ENCODE measurements at regions of chr2 and their contacts with region 1.

Region 1: DNA sequence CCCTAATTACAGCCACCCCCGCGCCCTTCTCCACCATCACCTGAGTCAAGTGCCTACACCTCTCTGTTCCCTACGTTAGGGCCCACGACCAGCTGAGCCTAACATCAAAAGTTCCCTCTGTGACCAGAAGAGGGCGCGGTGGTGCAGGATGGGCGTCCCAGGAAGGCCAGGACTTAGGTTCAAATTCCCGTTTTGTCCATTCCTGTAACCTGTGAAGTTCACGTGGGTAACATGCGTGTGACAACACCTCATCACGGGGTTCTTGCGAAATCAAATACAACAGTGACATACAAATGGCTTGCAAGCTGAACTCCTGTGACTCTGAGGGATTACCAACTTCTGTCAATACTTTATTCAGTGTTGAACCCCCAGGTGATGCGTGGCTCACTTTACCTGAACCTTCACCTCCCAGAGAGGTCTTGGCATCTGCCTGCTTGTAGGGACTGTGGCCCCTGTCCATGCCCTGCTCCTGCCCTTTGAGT is 207.9 kb downstream of the ARL4C start:
- DNase-seq: peak; percentile 65
- ATAC-seq: peak; percentile 84
- H3K4me3 ChIP-seq: no peak overlapping the region
- H3K27ac ChIP-seq: no peak overlapping the region
- H3K4me1 ChIP-seq: peaks cover 19 to 55% of the 10 kb centered on the region in 2 experiments; a peak in 3 of 4 replicates
- H3K27me3 ChIP-seq: no peaks in the 10 kb centered on the region
- CTCF ChIP-seq: peak; percentile 67 to 89 (median 83); a peak in 5 of 6 replicates
- POLR2A ChIP-seq: no peak
- RAD21 ChIP-seq: peak; percentile 90

Region 2: DNA sequence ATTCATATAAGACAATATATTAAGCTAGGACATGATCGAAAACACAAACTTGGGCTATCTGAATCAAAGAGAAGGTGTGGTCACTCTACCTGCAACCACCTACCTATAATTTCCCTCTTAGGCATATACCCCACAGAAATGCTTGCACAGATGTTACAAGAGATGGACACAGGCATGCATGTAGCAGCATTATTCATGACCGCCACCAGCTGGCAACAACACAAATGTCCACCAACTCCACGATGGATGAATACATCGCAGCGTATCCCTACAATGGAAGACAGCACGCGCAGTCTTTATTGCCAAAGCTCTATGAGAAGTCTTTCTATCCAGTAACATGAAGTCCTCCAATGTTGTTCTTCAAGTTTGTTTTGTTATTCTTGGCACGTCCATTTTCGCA is 117.1 kb after region 1 on chr2:
- CTCF ChIA-PET with region 1: interaction called, 3 read pairs
- POLR2A ChIA-PET with region 1: no interaction called
- RAD21 ChIA-PET with region 1: interaction called in 1 of 2 experiments, 3 read pairs
- intact Hi-C with region 1: loop called (anchors 2 kb)
- DNase-seq: no peak
- ATAC-seq: peak; percentile 75
- H3K4me3 ChIP-seq: no peak overlapping the region
- H3K27ac ChIP-seq: no peak overlapping the region
- H3K4me1 ChIP-seq: no peaks in the 10 kb centered on the region
- H3K27me3 ChIP-seq: no peaks in the 10 kb centered on the region
- CTCF ChIP-seq: peak; percentile 22 to 35 (median 25); a peak in 3 of 6 replicates
- POLR2A ChIP-seq: no peak
- RAD21 ChIP-seq: peak; percentile 65

Region 3: GRCh38 chr2:234425619-234426603 is 136.9 kb after region 1 on chr2:
- CTCF ChIA-PET with region 1: interaction called, 3 read pairs
- POLR2A ChIA-PET with region 1: no interaction called
- RAD21 ChIA-PET with region 1: no interaction called
- intact Hi-C with region 1: loop called (anchors 5 kb)
- DNase-seq: no peak
- ATAC-seq: no peak
- H3K4me3 ChIP-seq: no peak overlapping the region
- H3K27ac ChIP-seq: no peak overlapping the region
- H3K4me1 ChIP-seq: peaks cover 22 to 60% of the 10 kb centered on the region in 2 experiments
- H3K27me3 ChIP-seq: no peaks in the 10 kb centered on the region
- CTCF ChIP-seq: no peak
- POLR2A ChIP-seq: no peak
- RAD21 ChIP-seq: no peak

Region 4: GRCh38 chr2:234500394-234501006 is 211.5 kb after region 1 on chr2:
- CTCF ChIA-PET with region 1: interaction called, 18 read pairs
- POLR2A ChIA-PET with region 1: interaction called, 9 read pairs
- RAD21 ChIA-PET with region 1: interaction called, 3 to 5 read pairs
- intact Hi-C with region 1: loop called (anchors 1 kb)
- DNase-seq: peak; percentile 49
- ATAC-seq: peak; percentile 60
- H3K4me3 ChIP-seq: no peak overlapping the region
- H3K27ac ChIP-seq: no peak overlapping the region
- H3K4me1 ChIP-seq: peaks cover 24 to 29% of the 10 kb centered on the region in 2 experiments
- H3K27me3 ChIP-seq: no peaks in the 10 kb centered on the region
- CTCF ChIP-seq: peak; percentile 42 to 82 (median 69); a peak in 5 of 6 replicates
- POLR2A ChIP-seq: no peak
- RAD21 ChIP-seq: peak; percentile 94

Region 5: DNA sequence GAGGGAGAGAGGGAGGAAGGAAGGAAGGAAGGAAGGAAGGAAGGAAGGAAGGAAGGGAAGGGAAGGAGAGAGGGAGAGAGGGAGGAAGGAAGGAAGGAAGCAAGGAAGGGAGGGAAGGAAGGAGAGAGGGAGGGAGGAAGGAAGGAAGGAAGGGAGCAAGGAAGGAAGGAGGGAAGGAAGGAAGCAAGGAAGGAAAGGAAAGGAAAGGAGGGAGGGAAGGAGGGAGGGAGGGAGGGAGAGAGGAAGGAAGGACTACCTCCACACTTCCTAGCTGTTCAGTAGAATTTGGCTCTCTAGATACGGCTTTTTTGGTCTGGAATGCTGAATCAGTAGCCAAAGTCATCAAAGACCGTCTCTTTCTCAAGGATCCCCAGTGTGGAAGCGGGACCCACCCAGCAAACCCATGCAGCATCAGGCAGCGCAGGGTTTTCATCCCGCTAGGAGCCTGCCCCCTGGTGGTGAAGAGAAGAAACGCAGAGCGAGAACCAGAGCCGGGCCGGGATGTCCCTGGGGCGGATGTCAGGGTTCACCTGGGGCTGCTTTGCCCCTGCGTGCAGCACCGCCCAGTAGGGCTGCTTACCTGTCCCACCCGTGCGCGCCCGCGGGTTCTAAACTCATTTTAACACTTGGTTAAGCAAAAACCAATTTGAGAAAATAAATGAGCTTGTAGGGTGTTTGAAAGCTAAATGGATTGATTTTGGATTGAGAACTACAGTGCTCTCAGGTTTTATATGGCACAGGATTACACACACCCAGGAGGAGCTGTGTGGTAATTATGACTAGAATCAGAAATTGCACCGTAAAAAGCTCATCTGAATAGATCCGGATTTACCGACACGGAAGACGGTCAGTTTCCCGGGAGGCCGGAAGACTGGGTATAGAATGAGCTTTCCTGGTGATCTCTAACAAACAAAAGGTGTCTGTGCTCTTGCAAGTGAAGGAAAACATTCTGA is 255.9 kb after region 1 on chr2:
- CTCF ChIA-PET with region 1: interaction called, 7 read pairs
- POLR2A ChIA-PET with region 1: no interaction called
- RAD21 ChIA-PET with region 1: interaction called, 3 read pairs
- intact Hi-C with region 1: loop called (anchors 1 kb)
- DNase-seq: peak; percentile 38
- ATAC-seq: peak; percentile 96
- H3K4me3 ChIP-seq: no peak overlapping the region
- H3K27ac ChIP-seq: no peak overlapping the region
- H3K4me1 ChIP-seq: peaks cover 3 to 8% of the 10 kb centered on the region in 2 experiments; a peak in 2 of 4 replicates
- H3K27me3 ChIP-seq: no peaks in the 10 kb centered on the region
- CTCF ChIP-seq: peak; percentile 84 to 85 (median 85)
- POLR2A ChIP-seq: no peak
- RAD21 ChIP-seq: peak; percentile 90